ENCODE measurements at regions of chr18 and their contacts with region 1.

Region 1: DNA sequence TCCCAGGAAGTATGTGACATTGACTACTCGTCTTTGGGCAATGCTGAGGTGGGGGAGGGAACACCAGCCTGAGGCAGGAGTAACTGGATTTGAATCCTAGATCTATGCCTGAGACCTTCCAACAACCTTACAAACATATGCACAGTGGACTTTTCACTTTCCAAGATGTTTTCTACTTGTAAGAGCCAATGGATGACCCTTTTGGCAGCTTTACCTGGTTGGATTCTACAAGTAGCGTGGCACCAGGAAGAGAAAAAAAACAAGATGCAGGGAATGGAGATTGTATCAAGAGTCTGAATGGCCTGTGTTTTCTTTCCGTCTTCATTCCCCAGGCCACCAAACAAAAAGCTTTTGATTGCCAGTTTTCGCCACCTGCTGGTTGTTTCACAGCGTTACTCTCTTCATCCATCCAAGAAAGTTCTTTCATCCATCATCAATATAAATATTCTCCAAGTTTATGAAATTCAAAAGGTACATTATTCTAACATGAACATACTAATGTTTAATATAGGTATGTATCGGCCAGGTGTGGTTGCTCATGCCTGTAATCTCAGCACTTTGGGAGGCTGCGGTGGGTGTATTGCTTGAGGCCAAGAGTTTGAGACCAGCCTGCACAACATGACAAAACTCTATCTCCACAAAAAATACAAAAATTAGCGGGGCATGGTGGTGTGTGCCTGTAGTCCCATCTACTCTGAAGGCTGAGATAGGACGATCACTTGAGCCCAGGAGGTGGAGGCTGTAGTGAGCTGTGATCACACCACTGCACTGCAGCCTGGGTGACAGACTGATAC is 3.5 kb upstream of the BCL2 start:
- DNase-seq: peak; percentile 60
- H3K4me3 Mint-ChIP-seq: no peak overlapping the region
- H3K27ac Mint-ChIP-seq: peak overlapping the region; percentile 38
- H3K4me1 Mint-ChIP-seq: peaks cover 24% of the 10 kb centered on the region
- H3K27me3 Mint-ChIP-seq: peaks cover 16% of the 10 kb centered on the region
- CTCF ChIP-seq: peak; percentile 69

Region 2: DNA sequence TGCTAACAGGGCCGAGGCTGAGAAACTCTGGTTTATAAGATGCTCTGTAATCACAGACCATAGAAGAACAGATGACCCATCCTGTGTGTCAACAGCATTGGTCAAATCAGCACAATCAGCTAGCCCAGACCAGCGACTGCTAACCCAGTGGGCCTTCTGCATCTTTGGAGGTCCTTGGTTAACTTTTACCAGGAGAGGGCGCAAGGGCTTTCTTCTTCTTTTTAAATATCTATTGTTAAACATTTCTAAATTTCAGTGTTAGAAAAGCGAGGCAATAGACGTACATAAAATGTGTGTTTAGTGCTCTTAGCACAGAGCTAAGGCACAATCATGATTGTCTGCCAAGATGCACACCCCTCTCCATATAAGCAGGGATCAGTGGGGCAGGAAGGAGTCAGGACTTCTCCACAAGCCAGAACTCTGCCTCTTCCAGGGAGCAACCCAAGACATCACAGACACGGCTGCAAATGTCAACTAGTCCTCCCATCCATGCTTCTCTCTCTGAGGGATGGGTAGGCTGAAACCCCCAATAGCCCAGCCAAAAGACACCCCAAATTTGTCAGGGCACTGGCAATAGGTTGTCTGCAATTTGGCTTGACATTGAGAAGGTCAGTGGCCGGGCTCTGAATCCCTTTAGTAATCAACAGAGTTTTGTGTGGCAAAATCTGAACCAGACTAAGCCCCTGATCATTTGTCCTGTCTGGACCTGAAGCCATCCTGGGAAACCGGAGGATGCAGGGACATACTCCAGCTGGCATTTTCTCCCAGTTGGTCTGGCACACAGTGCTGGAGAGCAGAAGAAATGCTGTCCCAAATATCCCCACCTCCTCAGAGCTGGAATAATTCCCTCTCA is 191.7 kb before region 1 on chr18:
- CTCF ChIA-PET with region 1: interaction called, 4 read pairs
- intact Hi-C with region 1: loop called (anchors 1 kb)
- DNase-seq: peak; percentile 56
- H3K4me3 Mint-ChIP-seq: no peak overlapping the region
- H3K27ac Mint-ChIP-seq: no peak overlapping the region
- H3K4me1 Mint-ChIP-seq: no peaks in the 10 kb centered on the region
- H3K27me3 Mint-ChIP-seq: peaks cover 21% of the 10 kb centered on the region
- CTCF ChIP-seq: peak; percentile 51